ENCODE measurements at regions of chr3 and their contacts with region 1.

Region 1: GRCh38 chr3:184727357-184728009 is 15.6 kb upstream of the MAGEF1 start:
- DNase-seq: peak; percentile 55
- H3K27ac ChIP-seq: no peak overlapping the region
- CTCF ChIP-seq: peak; percentile 64

Region 2: GRCh38 chr3:184748219-184749135 is 21.0 kb after region 1 on chr3:
- CTCF ChIA-PET with region 1: interaction called, 13 read pairs
- POLR2A ChIA-PET with region 1: no interaction called
- DNase-seq: peak; percentile 66
- H3K27ac ChIP-seq: no peak overlapping the region
- CTCF ChIP-seq: peak; percentile 67

Measured in RWPE1 (cell line).